Endothelial cell of umbilical vein (primary cell): ENCODE measurements at regions of chr4 and their contacts with region 1.

Region 1: GRCh38 chr4:95304898-95305297 is 243.9 kb downstream of the UNC5C start:
- DNase-seq: no peak
- H3K4me3 ChIP-seq: no peak overlapping the region
- H3K27ac ChIP-seq: no peak overlapping the region
- H3K4me1 ChIP-seq: peaks cover 8% of the 10 kb centered on the region
- H3K27me3 ChIP-seq: no peaks in the 10 kb centered on the region
- CTCF ChIP-seq: no peak
- POLR2A ChIP-seq: no peak

Region 2: DNA sequence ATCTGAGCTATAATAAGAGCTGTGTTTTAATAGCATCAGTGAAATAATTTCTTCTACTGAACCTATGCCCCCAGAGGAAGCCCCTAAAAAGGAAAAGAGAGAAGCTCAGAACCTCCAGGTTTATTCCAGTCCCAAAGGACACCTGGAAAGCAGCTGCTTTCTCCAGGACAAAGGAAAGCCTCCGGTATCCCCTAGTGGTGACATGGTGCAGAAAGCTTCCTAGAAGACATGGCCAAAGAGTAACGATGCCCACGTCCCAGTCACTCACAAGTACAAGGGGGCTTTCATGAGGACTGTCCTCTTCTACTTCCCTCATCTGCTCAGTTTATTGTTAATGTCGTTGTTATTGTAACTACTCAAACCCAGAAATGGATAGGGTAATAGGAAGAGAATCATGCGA is 100.0 kb before region 1 on chr4:
- CTCF ChIA-PET with region 1: no interaction called
- POLR2A ChIA-PET with region 1: no interaction called
- dilution Hi-C with region 1: no loop called
- intact Hi-C with region 1: loop called (anchors 5 kb)
- DNase-seq: no peak
- H3K4me3 ChIP-seq: no peak overlapping the region
- H3K27ac ChIP-seq: no peak overlapping the region
- H3K4me1 ChIP-seq: no peaks in the 10 kb centered on the region
- H3K27me3 ChIP-seq: no peaks in the 10 kb centered on the region
- CTCF ChIP-seq: peak in 1 of 2 donors; percentile 25
- POLR2A ChIP-seq: no peak